ENCODE measurements at regions of chr15 and their contacts with region 1.

Region 1: DNA sequence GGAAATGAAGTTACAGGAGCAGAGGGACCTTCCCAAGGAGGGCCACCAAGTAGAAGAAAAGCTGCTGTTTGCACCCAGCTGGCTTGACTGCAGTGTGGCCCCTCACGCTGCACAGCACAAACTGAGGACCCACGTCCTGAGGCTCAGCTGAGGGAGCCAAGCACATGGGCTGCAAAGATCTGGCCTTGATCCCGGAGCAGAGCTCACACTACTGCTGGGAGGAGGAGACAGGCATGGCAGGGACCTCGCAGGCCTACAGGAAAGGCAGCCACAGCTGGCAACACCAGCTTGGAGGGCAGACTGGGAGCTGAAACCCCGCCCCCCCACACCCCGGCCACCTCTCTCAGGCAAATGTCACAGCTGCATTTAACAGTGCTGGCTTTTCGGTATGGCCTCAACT is 39.7 kb downstream of the KLHL25 start:
- DNase-seq: peak in 4 of 7 donors; percentile 41 to 53 (median 50)
- H3K4me3 ChIP-seq: no peak overlapping the region
- H3K27ac ChIP-seq: no peak overlapping the region
- H3K4me1 ChIP-seq: peaks cover 0 to 10% of the 10 kb centered on the region in 2 donors
- H3K27me3 ChIP-seq: no peaks in the 10 kb centered on the region
- CTCF ChIP-seq: no peak
- POLR2A ChIP-seq: no peak

Region 2: DNA sequence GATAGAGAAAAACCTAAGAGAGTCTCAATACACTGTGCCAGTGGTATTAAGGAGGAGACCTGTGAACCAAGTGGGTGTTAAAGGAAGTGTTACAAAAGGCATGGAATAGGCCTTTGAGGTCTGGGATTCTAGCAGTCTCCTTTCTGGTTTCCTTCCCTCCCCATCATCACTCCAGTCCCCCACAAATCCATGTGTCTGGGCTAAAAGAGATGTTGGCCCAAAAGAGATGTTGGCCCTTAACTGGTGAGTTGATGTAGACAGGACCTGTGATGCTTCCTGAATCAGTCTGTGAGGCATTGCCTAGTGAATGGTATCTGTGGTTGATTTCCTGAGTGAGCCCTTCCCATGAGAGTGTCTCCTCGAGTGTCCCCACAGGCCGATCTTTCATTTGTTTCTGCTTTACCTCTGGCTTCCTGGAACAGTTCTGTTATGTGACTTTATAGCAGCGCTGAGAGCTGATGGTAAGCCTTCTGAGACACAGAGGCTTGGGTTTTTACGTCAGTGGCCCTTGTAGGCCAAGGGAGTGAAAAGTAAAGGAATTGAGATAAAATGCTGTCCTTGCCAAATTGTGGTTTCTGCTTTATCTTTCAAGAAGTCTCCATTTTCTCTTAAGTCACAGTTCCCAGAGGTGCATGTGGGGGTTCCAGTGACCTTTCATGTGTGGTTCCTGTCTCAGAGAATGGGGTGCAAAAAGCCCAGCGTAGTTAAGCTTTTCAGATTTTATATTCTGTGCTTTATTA is 48.0 kb before region 1 on chr15:
- intact Hi-C with region 1: no loop called
- DNase-seq: peak in 4 of 7 donors; percentile 28 to 47 (median 40)
- H3K4me3 ChIP-seq: peak overlapping the region in 1 of 4 donors; percentile 44
- H3K27ac ChIP-seq: peak overlapping the region; percentile 54 to 90 (median 81)
- H3K4me1 ChIP-seq: peaks cover 29 to 71% of the 10 kb centered on the region in 2 donors
- H3K27me3 ChIP-seq: no peaks in the 10 kb centered on the region
- CTCF ChIP-seq: no peak
- POLR2A ChIP-seq: no peak

Region 3: GRCh38 chr15:85794603-85795336 is 39.8 kb after region 1 on chr15 and contains the start of gene KLHL25:
- intact Hi-C with region 1: loop called in 1 of 2 experiments (anchors 5 kb)
- DNase-seq: peak; percentile 93 to 97 (median 95)
- H3K4me3 ChIP-seq: peak within 1 kb of the TSS; percentile 66 to 86 (median 70)
- H3K27ac ChIP-seq: peak within 1 kb of the TSS; percentile 52 to 89 (median 81)
- H3K4me1 ChIP-seq: peaks cover 9 to 20% of the 10 kb centered on the region in 2 donors
- H3K27me3 ChIP-seq: no peaks in the 10 kb centered on the region
- CTCF ChIP-seq: no peak
- POLR2A ChIP-seq: peak; percentile 70 to 87
- total RNA-seq, gene KLHL25: 3.7 to 6.2 (median 4.5) TPM